KBM-7 (cell line): ENCODE measurements at regions of chr18 and their contacts with region 1.

Region 1: DNA sequence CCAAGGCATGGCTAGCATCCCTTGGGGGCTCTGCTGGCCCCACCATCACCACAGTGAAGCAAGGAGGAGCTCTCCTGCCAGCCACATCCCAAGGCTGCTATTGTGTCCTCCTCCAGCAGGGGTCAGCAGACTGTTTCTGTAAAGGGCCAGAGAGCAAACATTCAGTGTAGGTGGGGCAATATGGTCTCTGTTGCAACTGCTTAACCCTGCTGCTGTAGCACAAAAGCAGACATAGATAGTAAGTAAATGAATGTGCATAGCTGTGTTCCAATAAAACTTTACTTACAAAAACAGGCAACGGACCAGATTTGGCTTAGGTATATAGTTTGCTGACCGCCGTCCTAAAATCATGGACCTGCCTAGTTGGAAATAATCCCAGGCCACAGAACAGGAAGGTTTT is 36.4 kb upstream of the ZBTB7C start:
- DNase-seq: peak; percentile 83

Region 2: DNA sequence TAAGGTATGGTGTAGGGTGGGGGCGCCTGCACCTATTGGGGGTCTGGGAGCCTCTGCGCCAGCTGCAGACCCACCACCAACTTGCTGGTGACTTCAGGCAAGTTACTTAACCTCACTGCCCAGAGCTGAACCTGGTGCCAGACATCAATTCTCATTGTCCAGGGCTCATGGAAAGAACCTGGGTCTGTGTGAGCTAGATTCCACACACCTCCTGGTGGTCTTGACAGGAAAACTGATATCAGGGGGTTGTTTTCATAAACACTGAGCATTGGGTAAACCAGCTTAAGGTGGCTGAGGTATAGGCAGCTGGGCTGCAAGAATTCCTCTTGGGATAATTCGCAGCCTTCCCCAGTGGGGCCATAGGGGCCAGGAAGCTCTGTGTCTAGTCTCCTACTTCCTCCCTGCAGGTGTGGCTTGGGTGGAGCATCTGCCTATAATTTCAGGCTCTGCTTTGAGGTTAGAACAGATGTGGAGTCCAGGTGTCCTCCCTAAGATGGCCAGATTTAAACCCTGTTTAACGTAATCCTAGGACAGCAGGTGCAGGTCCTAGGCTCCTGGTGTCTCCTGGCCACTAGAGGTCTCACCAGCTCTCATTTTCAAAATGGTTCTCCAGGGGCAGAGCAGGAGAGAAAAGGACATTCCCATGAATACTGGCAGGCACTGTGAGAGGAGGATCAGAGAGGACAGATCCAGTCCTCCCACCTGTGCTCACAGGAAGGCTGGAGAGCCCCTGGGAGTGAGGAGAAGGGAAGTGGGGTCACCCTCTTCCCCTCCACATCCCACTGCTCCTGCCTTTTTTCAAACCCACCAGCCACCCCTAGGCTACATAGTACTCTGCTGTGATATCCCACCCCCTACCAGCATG is 414.7 kb before region 1 on chr18:
- in situ Hi-C with region 1: loop called (anchors 10 kb)
- DNase-seq: peak; percentile 53

Region 3: GRCh38 chr18:48230467-48231113 is 214.9 kb before region 1 on chr18:
- in situ Hi-C with region 1: loop called (anchors 25 kb)
- DNase-seq: peak; percentile 84